Dorsolateral prefrontal cortex (tissue), 120 donors: ENCODE measurements at regions of chr2 and their contacts with region 1.

Region 1: DNA sequence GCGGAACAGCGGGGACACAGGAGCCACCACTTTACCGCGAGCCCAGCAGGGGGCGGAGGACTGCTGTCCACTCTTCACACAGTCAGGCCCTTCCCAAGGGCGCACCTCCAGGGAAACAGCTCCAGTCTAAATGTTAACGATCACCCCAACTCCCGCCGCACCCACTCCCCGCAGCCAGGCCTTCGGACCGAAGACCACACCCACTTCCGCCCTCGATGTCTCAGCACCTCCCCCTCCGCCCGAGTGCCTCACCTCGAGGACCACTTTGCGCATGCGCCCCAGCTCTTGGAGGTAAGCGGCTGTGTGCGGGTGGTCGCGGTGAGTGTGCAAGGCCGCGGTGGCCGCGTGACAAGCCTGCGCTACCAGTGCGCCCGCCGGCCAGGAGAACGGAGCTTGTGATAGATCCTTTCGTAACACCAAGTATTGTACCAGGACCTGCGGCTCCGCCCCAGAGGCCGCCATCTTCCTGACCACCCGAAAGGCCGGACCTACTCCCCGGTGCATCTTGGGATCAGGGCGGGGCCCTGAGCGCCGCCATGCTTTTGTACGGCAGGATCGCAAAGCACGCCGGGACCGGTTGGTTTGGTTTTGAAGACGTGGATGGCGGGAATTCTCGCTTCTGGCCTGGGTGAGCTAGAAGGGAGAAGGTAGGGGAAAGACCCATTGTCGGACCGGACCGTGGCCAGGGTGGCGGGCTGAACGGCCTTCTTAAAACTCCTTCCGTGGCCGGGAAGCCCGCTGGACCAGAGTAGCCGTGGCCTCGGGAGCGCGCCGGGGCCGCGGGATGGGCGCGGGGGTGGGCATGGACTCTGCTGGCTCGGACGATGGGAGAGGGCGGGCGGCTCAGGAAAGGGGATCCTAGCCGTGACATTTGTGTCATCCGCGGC is at the starts of genes CENPO and PTRHD1:
- DNase-seq: peak; percentile 95 to 97 (median 97)
- H3K4me3 ChIP-seq: peak within 1 kb of the TSS; percentile 50 to 97 (median 85)
- H3K27ac ChIP-seq: peak within 1 kb of the TSS; percentile 93 to 100 (median 99)
- H3K27me3 ChIP-seq: no peaks in the 10 kb centered on the region
- CTCF ChIP-seq: peak in 54 of 56 donors; percentile 41 to 77 (median 59)
- total RNA-seq, gene CENPO: 4.9 to 17.9 (median 8.5) TPM
- total RNA-seq, gene PTRHD1: 12.2 to 33.9 (median 21.9) TPM

Region 2: DNA sequence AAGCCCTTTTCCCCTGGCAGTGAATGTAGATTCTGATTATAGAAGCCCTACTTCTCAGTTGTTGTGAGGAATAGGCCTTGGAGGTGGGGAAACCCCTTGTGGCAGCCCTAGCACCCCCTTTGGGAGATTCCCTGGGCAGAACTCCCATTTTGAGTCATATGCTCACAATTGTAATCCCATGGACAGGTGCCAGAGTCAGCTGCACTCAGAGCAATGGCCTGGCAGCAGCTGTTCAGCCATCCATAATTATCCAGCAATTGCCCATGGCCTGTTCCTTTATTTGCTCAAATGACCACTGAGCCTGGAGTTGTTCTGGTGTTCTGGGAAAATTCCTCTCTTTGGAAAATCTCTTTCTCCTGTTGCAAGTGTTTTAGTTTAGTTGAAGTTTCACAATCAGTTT is 71.6 kb before region 1 on chr2:
- intact Hi-C with region 1: loop called (anchors 2 to 5 kb)
- DNase-seq: peak; percentile 56 to 90 (median 80)
- H3K4me3 ChIP-seq: peak overlapping the region in 13 of 59 donors; percentile 0 to 40 (median 5)
- H3K27ac ChIP-seq: peak overlapping the region; percentile 6 to 89 (median 75)
- H3K27me3 ChIP-seq: no peaks in the 10 kb centered on the region
- CTCF ChIP-seq: peak in 23 of 56 donors; percentile 7 to 55 (median 26)